Activated T-helper 1 cell treated with anti-CD3 and anti-CD28 coated beads, Interleukin-12 subunit alpha, Interleukin-12 subunit beta, Interleukin-2, Interleukin-4 antibody, amounts not matched to agents 30 ng/mL and 10 ng/mL and 1 ng/mL, durations not matched to agents 14 hours and 24 hours and 36 hours (primary cell): ENCODE measurements at regions of chr15 and their contacts with region 1.

Region 1: DNA sequence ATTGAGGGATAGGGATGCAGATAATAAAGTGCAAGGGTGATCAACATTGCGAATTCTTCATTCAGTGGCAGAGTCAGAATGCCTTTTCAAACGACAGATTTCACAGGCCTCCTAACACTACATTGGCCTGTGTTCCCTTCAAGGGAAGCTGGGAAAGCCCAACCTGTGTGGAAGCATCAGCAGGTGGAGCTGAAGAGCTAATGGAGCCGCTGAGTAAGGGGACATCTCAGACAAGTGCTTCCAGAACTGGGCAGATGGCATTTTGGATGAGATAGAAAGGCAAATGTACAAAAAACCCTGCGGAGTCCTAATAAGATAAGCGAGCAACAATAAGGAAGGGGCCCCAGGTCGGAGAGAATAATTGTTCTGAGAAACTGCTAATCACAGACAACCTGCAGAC is 8.5 kb upstream of the SLC24A5 start:
- DNase-seq: no peak
- H3K4me3 Mint-ChIP-seq: no peak overlapping the region
- H3K27ac Mint-ChIP-seq: no peak overlapping the region
- H3K4me1 Mint-ChIP-seq: no peaks in the 10 kb centered on the region
- H3K27me3 Mint-ChIP-seq: peaks cover 14% of the 10 kb centered on the region

Region 2: DNA sequence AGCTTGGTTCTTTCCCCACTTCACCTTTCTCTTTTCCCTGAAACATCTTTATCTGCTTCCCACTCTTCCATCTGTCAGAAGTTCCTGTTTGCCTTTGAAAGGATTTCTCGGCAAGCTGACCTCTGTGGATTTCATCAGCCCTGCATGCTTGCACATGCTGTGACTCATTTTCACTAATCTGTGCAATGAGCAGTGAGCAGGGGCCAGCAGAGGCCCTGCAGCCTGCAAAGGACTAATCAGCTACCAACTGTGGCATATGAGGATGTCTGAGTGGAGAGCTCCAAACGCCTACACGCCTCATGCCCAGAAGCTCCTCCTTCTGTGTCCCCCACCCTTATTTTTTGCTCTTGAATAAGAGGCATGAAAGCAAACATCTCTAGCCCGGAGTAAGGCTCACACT is 727.9 kb before region 1 on chr15:
- intact Hi-C with region 1: no loop called
- DNase-seq: no peak
- H3K4me3 Mint-ChIP-seq: no peak overlapping the region
- H3K27ac Mint-ChIP-seq: no peak overlapping the region
- H3K4me1 Mint-ChIP-seq: no peaks in the 10 kb centered on the region
- H3K27me3 Mint-ChIP-seq: no peaks in the 10 kb centered on the region

Region 3: DNA sequence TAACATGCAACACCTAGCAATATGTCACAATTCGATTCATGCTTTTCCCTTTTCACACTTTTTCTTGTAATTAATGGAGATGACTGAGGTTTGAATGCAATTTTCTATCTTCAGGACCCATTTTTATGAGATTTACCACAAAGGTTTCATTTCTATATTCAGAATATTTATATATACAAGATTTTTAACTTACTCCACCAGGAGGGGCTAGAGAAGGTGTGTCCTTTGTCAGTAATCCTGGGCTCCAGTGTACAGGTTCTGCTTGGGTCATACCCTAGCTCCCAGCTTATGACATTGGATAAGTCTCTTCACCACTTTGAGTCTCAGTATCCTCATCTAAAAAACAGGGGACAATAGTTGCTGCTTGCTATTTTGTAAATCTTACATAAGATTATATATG is 87.1 kb before region 1 on chr15:
- intact Hi-C with region 1: no loop called
- DNase-seq: no peak
- H3K4me3 Mint-ChIP-seq: no peak overlapping the region
- H3K27ac Mint-ChIP-seq: no peak overlapping the region
- H3K4me1 Mint-ChIP-seq: no peaks in the 10 kb centered on the region
- H3K27me3 Mint-ChIP-seq: no peaks in the 10 kb centered on the region

Region 4: GRCh38 chr15:48285329-48286214 is 173.3 kb after region 1 on chr15:
- intact Hi-C with region 1: loop called (anchors 5 kb)
- DNase-seq: peak; percentile 19
- H3K4me3 Mint-ChIP-seq: no peak overlapping the region
- H3K27ac Mint-ChIP-seq: no peak overlapping the region
- H3K4me1 Mint-ChIP-seq: peaks cover 7% of the 10 kb centered on the region
- H3K27me3 Mint-ChIP-seq: peaks cover 6% of the 10 kb centered on the region